ENCODE measurements at regions of chr12 and their contacts with region 1.

Region 1: DNA sequence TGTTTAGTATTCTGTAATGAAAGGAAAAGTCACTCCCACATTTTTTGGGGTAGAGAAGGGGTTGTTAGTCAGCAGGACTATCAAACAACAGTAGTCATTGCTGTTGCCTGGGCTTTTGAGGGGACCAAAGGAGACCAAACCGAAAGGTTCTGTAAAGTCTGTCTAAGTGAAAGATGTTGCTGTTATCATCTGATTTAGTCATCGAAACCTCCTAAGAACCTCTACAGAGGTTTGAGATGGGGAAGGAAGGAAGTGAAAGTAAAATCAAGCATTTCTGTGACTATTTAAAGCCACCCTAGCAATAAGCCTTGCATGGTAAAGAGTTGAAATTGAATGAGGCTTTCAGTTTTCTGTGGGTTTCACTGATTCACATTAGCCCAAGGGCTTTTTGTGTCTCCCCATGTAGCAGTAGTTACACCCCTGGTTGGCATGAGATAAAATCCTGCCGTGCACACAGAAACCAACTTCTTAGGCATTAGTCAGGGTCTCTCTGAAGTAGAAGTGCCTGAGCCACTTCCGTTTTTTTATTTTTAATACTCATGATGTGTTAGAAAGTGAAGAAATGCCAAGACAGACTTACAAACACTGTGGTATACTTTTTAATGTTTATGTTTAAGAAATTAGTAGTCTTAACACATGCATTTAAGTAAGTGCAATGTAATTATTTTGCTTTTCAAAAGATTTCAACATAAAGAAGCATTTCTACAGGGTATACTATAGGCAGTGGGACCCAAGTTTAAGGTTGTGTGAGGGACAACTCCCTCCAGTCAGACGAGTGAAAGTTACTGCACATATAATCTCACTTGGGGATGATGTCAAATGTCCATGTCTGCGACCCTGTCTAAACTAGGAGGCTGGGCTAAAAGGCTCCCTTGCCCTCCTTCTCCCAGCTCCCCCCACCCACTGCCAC is 50.4 kb downstream of the DYRK2 start:
- DNase-seq: peak; percentile 76
- ATAC-seq: peak; percentile 93
- H3K4me3 Mint-ChIP-seq: peak overlapping the region; percentile 32
- H3K27ac Mint-ChIP-seq: peak overlapping the region; percentile 74
- H3K4me1 Mint-ChIP-seq: peaks cover 57% of the 10 kb centered on the region
- H3K27me3 Mint-ChIP-seq: no peaks in the 10 kb centered on the region

Region 2: DNA sequence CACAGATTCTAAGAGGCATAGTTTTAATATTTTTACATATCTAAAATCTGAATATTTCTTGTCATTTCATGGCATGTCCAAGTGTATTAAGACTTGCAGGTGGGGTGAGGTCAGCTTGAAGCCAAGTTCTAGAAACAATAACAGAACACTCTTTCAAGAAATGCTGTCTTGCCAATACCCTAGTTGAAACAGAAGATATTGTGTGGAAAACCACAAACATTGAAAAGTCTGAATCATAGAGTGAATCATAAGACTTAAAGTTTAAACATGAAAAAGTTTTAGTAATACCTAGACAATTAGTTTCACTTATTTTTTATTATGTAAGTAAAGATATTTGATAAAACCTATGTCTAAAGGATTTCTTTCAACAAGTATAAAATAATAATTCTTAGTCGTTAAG is 621.3 kb before region 1 on chr12:
- CTCF ChIA-PET with region 1: no interaction called
- POLR2A ChIA-PET with region 1: no interaction called
- intact Hi-C with region 1: loop called in 1 of 2 experiments (anchors 2 kb)
- DNase-seq: peak; percentile 5
- ATAC-seq: peak; percentile 58
- H3K4me3 Mint-ChIP-seq: no peak overlapping the region
- H3K27ac Mint-ChIP-seq: no peak overlapping the region
- H3K4me1 Mint-ChIP-seq: peaks cover 9% of the 10 kb centered on the region
- H3K27me3 Mint-ChIP-seq: peaks cover 31% of the 10 kb centered on the region

Region 3: GRCh38 chr12:67592216-67593011 is 106.5 kb before region 1 on chr12:
- CTCF ChIA-PET with region 1: interaction called, 3 read pairs
- POLR2A ChIA-PET with region 1: no interaction called
- intact Hi-C with region 1: loop called (anchors 2 to 5 kb)
- DNase-seq: peak; percentile 7
- ATAC-seq: peak; percentile 64
- H3K4me3 Mint-ChIP-seq: no peak overlapping the region
- H3K27ac Mint-ChIP-seq: peak overlapping the region; percentile 66
- H3K4me1 Mint-ChIP-seq: peaks cover 47% of the 10 kb centered on the region
- H3K27me3 Mint-ChIP-seq: no peaks in the 10 kb centered on the region

Region 4: DNA sequence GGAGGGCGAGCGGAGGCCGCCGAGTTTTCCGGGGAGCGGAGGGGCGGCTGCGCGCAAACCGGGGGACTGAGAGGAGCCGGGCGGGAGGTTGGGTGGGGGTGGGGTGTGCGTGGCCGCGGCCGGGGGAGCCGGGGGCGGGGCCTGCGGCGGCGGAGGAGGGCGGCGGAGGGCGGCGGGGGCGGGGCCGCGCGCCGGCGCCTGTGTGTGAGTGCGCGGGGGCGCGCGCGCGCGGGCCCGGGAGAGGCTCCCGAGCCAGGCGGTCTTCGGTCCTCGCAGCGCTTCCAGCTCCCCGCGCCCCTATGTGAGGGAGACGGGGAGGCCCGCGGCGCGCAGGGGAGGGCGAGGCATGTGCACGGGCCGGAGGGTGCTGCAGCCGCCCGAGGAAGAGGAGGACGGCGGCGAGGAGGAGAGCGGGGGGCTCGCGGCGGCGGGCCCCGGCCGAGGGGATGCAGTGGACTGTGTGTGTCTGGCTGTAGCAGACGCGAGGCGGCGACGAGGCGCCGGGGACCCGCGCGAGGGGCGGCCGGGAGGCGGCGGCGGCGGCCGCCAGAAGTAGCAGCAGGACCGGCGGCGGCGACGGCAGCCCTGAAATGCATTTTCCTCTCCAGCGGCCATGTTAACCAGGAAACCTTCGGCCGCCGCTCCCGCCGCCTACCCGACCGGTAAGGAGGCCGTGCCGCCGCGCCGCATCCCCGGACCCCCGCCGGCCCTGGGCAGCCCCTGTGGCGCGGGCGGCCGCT is 50.2 kb before region 1 on chr12 and contains the start of gene DYRK2:
- CTCF ChIA-PET with region 1: no interaction called
- POLR2A ChIA-PET with region 1: no interaction called
- intact Hi-C with region 1: loop called (anchors 1 to 2 kb)
- DNase-seq: peak; percentile 83
- ATAC-seq: peak; percentile 30
- H3K4me3 Mint-ChIP-seq: peak within 1 kb of the TSS; percentile 98
- H3K27ac Mint-ChIP-seq: peak within 1 kb of the TSS; percentile 78
- H3K4me1 Mint-ChIP-seq: peaks cover 45% of the 10 kb centered on the region
- H3K27me3 Mint-ChIP-seq: no peaks in the 10 kb centered on the region
- total RNA-seq, gene DYRK2: 19.2 to 21.5 TPM

Region 5: DNA sequence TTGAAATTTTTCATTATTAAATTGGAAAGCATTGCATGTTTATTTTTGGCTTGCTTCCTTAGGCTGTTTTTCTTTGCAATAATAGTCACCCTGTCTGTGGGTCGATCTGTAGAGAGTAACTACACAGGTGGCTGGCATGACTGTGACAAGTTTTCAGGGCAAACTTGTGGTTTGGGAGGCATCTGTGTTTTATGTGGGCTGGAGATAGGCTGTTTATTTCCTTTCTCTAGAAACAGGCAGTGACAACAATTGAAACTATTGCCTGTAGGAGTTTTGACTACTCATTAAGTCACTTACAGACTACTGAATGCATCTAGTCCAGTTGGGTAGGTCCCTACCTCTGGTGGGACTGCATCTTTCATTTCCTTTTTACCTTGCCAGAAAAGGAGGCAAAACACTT is 105.2 kb after region 1 on chr12:
- CTCF ChIA-PET with region 1: no interaction called
- POLR2A ChIA-PET with region 1: no interaction called
- intact Hi-C with region 1: loop called (anchors 1 kb)
- DNase-seq: peak; percentile 76
- ATAC-seq: peak; percentile 98
- H3K4me3 Mint-ChIP-seq: no peak overlapping the region
- H3K27ac Mint-ChIP-seq: no peak overlapping the region
- H3K4me1 Mint-ChIP-seq: peaks cover 27% of the 10 kb centered on the region
- H3K27me3 Mint-ChIP-seq: peaks cover 4% of the 10 kb centered on the region

Region 6: DNA sequence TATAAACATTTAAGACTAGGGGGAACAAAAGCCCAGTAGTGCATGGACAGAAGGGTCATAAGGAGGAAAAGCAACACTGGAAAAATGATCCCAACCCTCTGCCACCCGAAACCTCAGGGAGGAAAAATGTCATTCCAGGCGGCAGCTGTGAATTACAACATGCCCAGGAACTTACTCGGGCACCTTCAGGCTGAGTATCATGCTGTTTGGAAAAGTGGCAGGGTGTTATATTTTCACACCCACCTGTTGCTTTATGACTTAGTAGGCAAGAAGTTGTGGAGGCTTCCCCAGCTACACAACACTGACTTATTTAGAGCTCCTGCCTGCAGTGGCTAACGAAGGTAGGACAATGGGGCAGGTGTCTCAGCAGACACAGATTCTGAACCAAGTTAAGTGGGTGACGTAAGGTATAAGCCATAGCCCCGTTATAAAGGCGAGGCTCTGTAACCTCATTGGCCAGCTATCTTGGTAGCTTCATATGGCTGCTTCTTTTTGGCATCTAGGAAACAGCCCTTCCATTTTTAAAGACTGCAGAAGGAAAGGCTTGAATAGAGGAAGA is 194.2 kb after region 1 on chr12:
- CTCF ChIA-PET with region 1: no interaction called
- POLR2A ChIA-PET with region 1: no interaction called
- intact Hi-C with region 1: no loop called
- DNase-seq: no peak
- ATAC-seq: no peak
- H3K4me3 Mint-ChIP-seq: no peak overlapping the region
- H3K27ac Mint-ChIP-seq: no peak overlapping the region
- H3K4me1 Mint-ChIP-seq: peaks cover 9% of the 10 kb centered on the region
- H3K27me3 Mint-ChIP-seq: no peaks in the 10 kb centered on the region

Region 7: DNA sequence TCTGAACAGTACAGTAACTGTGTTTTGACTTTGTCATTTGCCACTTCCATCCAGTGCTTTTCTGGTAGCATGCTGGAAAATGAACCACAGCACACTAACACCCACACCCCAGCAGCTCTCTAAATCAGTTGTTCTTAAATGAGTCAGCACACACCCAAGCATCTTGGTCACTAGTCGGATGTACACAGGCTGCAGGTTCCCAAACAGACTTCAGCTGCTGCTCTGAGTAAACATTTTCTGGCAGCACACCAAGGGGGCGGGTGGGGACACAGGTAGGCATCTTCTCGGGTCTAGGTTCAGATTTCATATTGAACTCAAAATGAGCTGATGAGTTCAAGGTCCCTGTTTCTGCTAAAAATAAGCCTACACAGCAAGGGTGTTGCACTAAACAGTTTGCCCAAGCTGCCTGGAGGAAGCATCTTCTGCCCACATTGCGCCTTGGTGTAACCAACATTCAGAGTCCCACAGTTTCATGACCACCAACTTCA is 420.8 kb after region 1 on chr12:
- CTCF ChIA-PET with region 1: no interaction called
- POLR2A ChIA-PET with region 1: no interaction called
- intact Hi-C with region 1: loop called in 1 of 2 experiments (anchors 2 kb)
- DNase-seq: peak; percentile 84
- ATAC-seq: peak; percentile 82
- H3K4me3 Mint-ChIP-seq: no peak overlapping the region
- H3K27ac Mint-ChIP-seq: peak overlapping the region; percentile 48
- H3K4me1 Mint-ChIP-seq: peaks cover 20% of the 10 kb centered on the region
- H3K27me3 Mint-ChIP-seq: peaks cover 3% of the 10 kb centered on the region

Region 8: GRCh38 chr12:68290126-68290525 is 591.2 kb after region 1 on chr12:
- CTCF ChIA-PET with region 1: no interaction called
- POLR2A ChIA-PET with region 1: no interaction called
- intact Hi-C with region 1: loop called (anchors 5 kb)
- DNase-seq: peak; percentile 49
- ATAC-seq: peak; percentile 91
- H3K4me3 Mint-ChIP-seq: no peak overlapping the region
- H3K27ac Mint-ChIP-seq: no peak overlapping the region
- H3K4me1 Mint-ChIP-seq: peaks cover 39% of the 10 kb centered on the region
- H3K27me3 Mint-ChIP-seq: peaks cover 13% of the 10 kb centered on the region

Measured in activated CD4-positive, alpha-beta T cell treated with anti-CD3 and anti-CD28 coated beads for 36 hours (primary cell).